Activated CD8-positive, alpha-beta T cell treated with anti-CD3 and anti-CD28 coated beads for 36 hours (primary cell): ENCODE measurements at regions of chr7 and their contacts with region 1.

Region 1: GRCh38 chr7:50369143-50370026 is 64.9 kb downstream of the IKZF1 start:
- DNase-seq: peak; percentile 60
- ATAC-seq: peak; percentile 24
- H3K4me3 Mint-ChIP-seq: peak overlapping the region; percentile 5
- H3K27ac Mint-ChIP-seq: peak overlapping the region; percentile 95
- H3K4me1 Mint-ChIP-seq: peaks cover 97% of the 10 kb centered on the region
- H3K27me3 Mint-ChIP-seq: no peaks in the 10 kb centered on the region
- CTCF ChIP-seq: peak; percentile 94

Region 2: GRCh38 chr7:50056131-50056530 is 313.3 kb before region 1 on chr7:
- CTCF ChIA-PET with region 1: no interaction called
- POLR2A ChIA-PET with region 1: no interaction called
- intact Hi-C with region 1: no loop called
- DNase-seq: no peak
- ATAC-seq: no peak
- H3K4me3 Mint-ChIP-seq: no peak overlapping the region
- H3K27ac Mint-ChIP-seq: no peak overlapping the region
- H3K4me1 Mint-ChIP-seq: no peaks in the 10 kb centered on the region
- H3K27me3 Mint-ChIP-seq: peaks cover 2% of the 10 kb centered on the region
- CTCF ChIP-seq: no peak

Region 3: DNA sequence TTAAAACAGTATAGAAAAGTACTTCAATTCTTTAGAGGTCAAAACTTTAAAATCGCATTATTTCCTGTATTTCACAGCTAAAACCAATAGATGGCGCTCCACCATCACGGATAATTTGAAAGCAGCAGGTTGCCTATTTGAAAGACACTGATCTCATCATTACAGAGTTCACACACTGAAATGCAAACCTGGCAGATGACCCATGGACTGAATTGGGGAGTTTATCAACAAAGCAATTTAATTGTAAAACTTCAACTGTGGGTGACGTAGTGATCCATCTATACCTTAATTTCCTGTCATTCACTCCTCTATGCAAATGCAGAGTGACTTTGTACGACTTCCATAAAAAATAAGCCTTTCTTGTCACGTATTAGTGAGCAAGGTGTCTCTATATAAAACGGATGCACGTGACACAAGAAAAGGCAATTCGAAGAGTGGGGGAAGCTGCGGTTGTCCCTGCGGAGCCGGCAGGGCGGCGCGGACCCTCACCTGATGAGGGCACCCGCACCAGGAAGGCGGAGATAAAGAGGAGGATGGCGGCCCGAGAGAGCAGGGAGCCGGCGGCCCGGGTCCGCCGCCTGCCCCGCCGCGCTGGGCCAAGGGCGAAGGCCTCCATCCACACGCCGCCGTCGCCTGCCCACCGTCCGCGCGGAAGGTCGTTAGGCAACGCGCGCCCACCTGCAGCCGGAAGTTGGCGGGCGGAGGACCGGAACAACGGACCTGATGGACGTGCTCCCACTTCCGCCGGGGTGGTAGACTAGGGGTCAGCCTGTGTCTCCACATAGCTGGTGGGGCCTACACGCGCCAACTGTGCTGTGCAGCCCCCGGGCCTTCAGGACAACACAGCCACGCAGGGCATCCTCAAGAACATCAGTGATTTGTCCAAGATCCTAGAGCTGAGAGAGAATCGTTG is 276.6 kb before region 1 on chr7 and contains the start of gene ZPBP:
- CTCF ChIA-PET with region 1: interaction called, 14 read pairs
- POLR2A ChIA-PET with region 1: no interaction called
- intact Hi-C with region 1: no loop called
- DNase-seq: peak; percentile 71
- ATAC-seq: peak; percentile 81
- H3K4me3 Mint-ChIP-seq: peak within 1 kb of the TSS; percentile 84
- H3K27ac Mint-ChIP-seq: peak within 1 kb of the TSS; percentile 93
- H3K4me1 Mint-ChIP-seq: peaks cover 19% of the 10 kb centered on the region
- H3K27me3 Mint-ChIP-seq: no peaks in the 10 kb centered on the region
- CTCF ChIP-seq: peak; percentile 98
- total RNA-seq, gene ZPBP: 0.36 TPM in 1 of 2 experiments, not detected in the other

Region 4: GRCh38 chr7:50229964-50230363 is 139.4 kb before region 1 on chr7:
- CTCF ChIA-PET with region 1: interaction called, 12 read pairs
- POLR2A ChIA-PET with region 1: interaction called, 3 read pairs
- intact Hi-C with region 1: no loop called
- DNase-seq: no peak
- ATAC-seq: no peak
- H3K4me3 Mint-ChIP-seq: no peak overlapping the region
- H3K27ac Mint-ChIP-seq: no peak overlapping the region
- H3K4me1 Mint-ChIP-seq: peaks cover 42% of the 10 kb centered on the region
- H3K27me3 Mint-ChIP-seq: no peaks in the 10 kb centered on the region
- CTCF ChIP-seq: peak; percentile 98

Region 5: GRCh38 chr7:50251765-50252164 is 117.6 kb before region 1 on chr7:
- CTCF ChIA-PET with region 1: no interaction called
- POLR2A ChIA-PET with region 1: no interaction called
- intact Hi-C with region 1: no loop called
- DNase-seq: no peak
- ATAC-seq: no peak
- H3K4me3 Mint-ChIP-seq: no peak overlapping the region
- H3K27ac Mint-ChIP-seq: no peak overlapping the region
- H3K4me1 Mint-ChIP-seq: peaks cover 23% of the 10 kb centered on the region
- H3K27me3 Mint-ChIP-seq: no peaks in the 10 kb centered on the region
- CTCF ChIP-seq: no peak

Region 6: DNA sequence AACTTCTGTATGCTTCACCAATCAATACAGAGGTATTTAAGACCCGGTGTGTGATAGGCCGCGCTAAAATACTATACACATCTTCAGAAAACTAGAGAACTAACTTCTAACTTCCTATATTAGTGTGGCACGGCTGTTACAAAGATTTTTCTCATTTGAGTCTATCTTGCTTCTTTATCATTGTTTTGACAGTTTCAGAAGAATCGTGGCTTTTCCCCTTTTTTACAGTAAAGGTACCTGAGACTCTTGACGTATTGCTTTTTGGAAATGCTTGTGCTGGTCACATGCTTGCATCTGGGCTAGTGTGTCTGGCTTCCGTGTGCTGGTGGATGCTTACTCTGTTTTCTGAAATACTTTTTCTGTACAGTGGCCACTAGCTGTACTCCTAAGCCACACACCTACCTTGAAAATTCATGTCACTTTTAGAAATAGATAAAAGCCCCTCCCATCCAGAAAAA is 52.1 kb before region 1 on chr7:
- CTCF ChIA-PET with region 1: interaction called, 99 read pairs
- POLR2A ChIA-PET with region 1: interaction called, 1,646 read pairs
- intact Hi-C with region 1: no loop called
- DNase-seq: peak; percentile 75
- ATAC-seq: peak; percentile 82
- H3K4me3 Mint-ChIP-seq: peak overlapping the region; percentile 94
- H3K27ac Mint-ChIP-seq: peak overlapping the region; percentile 97
- H3K4me1 Mint-ChIP-seq: peaks cover 88% of the 10 kb centered on the region
- H3K27me3 Mint-ChIP-seq: no peaks in the 10 kb centered on the region
- CTCF ChIP-seq: peak; percentile 7

Region 7: DNA sequence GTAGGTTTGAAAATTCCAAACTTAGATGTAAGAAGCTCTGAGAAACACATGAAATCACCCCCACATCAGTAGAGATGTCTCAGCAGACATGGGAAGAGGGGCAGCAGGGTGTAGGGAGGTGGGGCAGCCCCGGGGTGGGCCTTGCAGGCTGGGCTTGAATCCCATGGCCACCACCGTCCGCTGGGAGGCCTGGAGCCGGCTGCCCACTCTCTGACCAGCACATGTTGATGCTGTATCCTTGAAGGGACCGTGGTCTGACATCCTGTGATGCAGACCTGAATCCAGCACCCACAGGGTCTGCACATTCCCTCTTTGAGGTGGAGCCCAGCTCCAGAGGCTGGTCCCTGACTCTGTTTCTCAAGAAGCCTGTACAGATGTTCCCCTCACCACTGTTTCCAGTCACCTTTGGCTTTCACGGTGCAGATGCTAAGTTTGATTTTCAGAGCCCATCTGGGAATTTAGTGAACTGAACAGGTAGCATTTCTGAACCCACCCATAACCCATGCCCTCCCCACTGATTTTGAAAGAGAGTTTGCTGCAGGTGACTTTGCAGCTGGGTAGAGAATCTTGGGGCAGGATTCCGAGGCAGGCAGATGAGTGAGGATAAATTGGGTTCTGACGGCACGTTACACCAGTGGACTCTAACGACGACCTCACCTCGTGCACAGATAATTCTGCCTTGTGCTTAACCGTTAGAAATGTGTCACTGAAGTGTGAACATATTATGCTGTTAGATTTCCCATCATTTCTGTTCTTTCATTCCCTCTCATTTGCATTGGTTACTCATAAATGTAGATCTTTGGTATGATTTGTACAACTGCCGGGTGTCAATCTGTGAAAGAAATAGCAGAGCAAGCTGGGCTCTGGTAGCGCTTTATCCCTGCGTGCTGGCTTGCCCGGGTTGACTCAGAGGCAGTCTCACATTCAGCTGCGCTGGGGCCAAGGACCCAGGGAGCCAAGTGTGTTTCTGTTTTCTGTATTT is 19.1 kb before region 1 on chr7:
- CTCF ChIA-PET with region 1: interaction called, 43 read pairs
- POLR2A ChIA-PET with region 1: interaction called, 1,027 read pairs
- intact Hi-C with region 1: loop called (anchors 2 kb)
- DNase-seq: peak; percentile 94
- ATAC-seq: peak; percentile 71
- H3K4me3 Mint-ChIP-seq: peak overlapping the region; percentile 42
- H3K27ac Mint-ChIP-seq: peak overlapping the region; percentile 95
- H3K4me1 Mint-ChIP-seq: peaks cover 96% of the 10 kb centered on the region
- H3K27me3 Mint-ChIP-seq: no peaks in the 10 kb centered on the region
- CTCF ChIP-seq: no peak

Region 8: DNA sequence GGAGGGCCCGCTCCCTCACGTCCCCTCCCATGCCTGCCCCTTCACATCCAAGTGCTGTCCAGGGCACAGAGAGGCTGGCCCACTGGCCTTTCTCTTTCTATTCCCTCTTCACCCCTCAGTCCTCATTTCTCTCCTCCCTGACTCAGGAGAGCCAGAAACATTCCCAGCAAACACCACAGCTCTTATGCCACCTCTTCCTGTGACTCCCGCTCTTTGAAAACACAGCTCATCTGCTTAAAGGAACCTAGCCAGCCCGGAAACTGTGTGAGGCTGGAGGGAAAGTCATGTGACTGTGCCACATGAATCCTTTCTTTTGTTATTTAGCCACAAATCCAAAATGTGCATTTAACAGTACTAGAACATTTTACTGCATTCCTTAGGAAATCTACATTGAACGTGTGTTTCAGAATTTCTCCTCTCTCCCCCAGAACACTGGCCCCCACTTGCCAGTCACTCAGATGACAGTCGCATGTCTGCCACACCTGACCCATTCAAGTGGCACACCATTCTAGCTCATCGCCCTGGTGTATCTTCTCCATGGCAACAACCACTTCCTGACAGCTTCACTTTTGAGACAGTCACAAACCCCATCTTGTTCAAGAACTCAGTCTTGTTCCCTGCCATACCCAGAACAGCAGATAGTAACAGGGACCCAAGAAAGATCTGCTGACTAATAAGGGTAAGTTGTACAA is 370.5 kb after region 1 on chr7:
- CTCF ChIA-PET with region 1: no interaction called
- POLR2A ChIA-PET with region 1: no interaction called
- intact Hi-C with region 1: no loop called
- DNase-seq: peak; percentile 76
- ATAC-seq: peak; percentile 99
- H3K4me3 Mint-ChIP-seq: peak overlapping the region; percentile 30
- H3K27ac Mint-ChIP-seq: peak overlapping the region; percentile 63
- H3K4me1 Mint-ChIP-seq: peaks cover 17% of the 10 kb centered on the region
- H3K27me3 Mint-ChIP-seq: no peaks in the 10 kb centered on the region
- CTCF ChIP-seq: no peak

Region 9: GRCh38 chr7:50939021-50939420 is 569.6 kb after region 1 on chr7:
- CTCF ChIA-PET with region 1: no interaction called
- POLR2A ChIA-PET with region 1: no interaction called
- intact Hi-C with region 1: no loop called
- DNase-seq: no peak
- ATAC-seq: no peak
- H3K4me3 Mint-ChIP-seq: no peak overlapping the region
- H3K27ac Mint-ChIP-seq: no peak overlapping the region
- H3K4me1 Mint-ChIP-seq: no peaks in the 10 kb centered on the region
- H3K27me3 Mint-ChIP-seq: peaks cover 8% of the 10 kb centered on the region
- CTCF ChIP-seq: no peak